ENCODE measurements at regions of chrX and their contacts with region 1.

Region 1: DNA sequence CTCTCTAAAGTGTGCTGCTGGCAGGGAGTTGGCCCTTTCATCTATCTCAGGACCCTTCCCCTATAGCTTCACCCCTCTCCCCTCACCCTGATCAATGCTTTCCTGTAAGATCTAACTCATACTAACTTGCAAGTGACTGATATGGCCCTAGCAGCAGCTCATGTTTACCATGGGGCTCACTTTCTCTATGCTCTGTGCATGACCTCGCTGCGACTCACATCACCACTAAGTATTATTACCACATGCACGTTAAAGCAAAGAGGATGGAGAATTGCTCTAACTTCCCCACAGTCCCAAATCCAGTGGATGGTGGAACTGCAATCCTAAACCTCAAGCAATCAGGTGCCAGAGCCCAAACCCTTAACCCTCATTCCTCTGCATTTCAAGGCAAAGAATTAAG is 626.6 kb downstream of the MID1IP1 start:
- DNase-seq: no peak
- H3K4me3 Mint-ChIP-seq: no peak overlapping the region
- H3K27ac Mint-ChIP-seq: peak overlapping the region; percentile 98
- H3K4me1 Mint-ChIP-seq: peaks cover 58% of the 10 kb centered on the region
- H3K27me3 Mint-ChIP-seq: no peaks in the 10 kb centered on the region

Region 2: GRCh38 chrX:39162322-39162735 is 265.6 kb before region 1 on chrX:
- intact Hi-C with region 1: loop called (anchors 10 kb)
- DNase-seq: no peak
- H3K4me3 Mint-ChIP-seq: peak overlapping the region; percentile 22
- H3K27ac Mint-ChIP-seq: peak overlapping the region; percentile 71
- H3K4me1 Mint-ChIP-seq: peaks cover 45% of the 10 kb centered on the region
- H3K27me3 Mint-ChIP-seq: peaks cover 2% of the 10 kb centered on the region

Region 3: DNA sequence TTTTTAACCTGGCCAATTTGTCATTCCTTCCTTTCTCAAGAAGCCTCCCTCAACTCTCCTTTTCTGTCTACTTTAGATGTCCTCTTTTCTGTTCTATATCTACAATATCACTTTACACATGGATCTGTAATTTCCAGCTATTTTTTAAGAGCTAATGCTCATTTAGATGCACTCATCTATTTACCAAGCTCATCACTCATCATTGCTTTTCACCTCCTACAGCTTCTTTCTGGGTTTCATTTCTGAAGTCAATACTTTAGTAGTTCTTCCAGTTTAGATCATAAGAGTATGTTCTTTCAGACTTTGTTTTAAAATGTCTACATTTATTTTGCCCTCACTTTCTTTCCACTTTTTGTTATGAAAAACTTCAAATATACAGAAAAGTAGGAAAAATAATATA is 159.7 kb before region 1 on chrX:
- intact Hi-C with region 1: loop called (anchors 2 kb)
- DNase-seq: no peak
- H3K4me3 Mint-ChIP-seq: peak overlapping the region; percentile 24
- H3K27ac Mint-ChIP-seq: peak overlapping the region; percentile 84
- H3K4me1 Mint-ChIP-seq: peaks cover 39% of the 10 kb centered on the region
- H3K27me3 Mint-ChIP-seq: no peaks in the 10 kb centered on the region

Region 4: DNA sequence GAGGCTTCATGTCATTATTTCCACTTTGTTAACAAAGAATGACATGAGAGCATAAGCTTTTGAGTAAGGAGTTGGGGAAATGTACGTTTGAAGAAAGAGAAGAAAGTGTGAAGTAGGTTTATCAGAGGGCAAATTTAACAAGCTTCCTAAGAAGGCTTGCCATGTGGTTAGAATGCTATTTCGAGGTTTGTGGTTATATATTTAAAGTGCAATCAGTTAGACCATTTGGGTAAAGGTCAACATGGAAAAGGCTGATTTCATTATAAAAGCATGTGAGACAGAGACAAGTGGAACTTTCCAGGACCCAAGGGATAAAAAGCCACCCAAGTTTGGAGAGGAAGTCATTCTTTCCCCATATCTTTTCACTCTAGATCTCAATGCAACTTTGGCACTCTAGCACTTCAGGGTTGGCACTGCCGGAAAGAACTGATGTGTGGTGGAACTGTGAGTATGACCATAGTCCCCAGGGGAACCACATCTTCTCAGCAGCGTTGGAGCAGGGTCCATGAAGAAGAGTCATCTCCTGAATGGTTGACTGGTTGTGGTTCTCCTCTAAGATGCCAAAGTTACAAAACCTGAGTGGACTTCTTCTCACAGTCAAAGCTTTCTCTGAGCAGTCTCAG is 96.7 kb before region 1 on chrX:
- intact Hi-C with region 1: loop called (anchors 1 kb)
- DNase-seq: peak; percentile 3
- H3K4me3 Mint-ChIP-seq: peak overlapping the region; percentile 42
- H3K27ac Mint-ChIP-seq: peak overlapping the region; percentile 76
- H3K4me1 Mint-ChIP-seq: peaks cover 73% of the 10 kb centered on the region
- H3K27me3 Mint-ChIP-seq: peaks cover 2% of the 10 kb centered on the region

Region 5: GRCh38 chrX:39504850-39505259 is 76.9 kb after region 1 on chrX:
- intact Hi-C with region 1: loop called (anchors 1 kb)
- DNase-seq: no peak
- H3K4me3 Mint-ChIP-seq: no peak overlapping the region
- H3K27ac Mint-ChIP-seq: no peak overlapping the region
- H3K4me1 Mint-ChIP-seq: peaks cover 26% of the 10 kb centered on the region
- H3K27me3 Mint-ChIP-seq: peaks cover 6% of the 10 kb centered on the region

Region 6: GRCh38 chrX:39883666-39884065 is 455.8 kb after region 1 on chrX:
- intact Hi-C with region 1: loop called (anchors 5 kb)
- DNase-seq: peak; percentile 12
- H3K4me3 Mint-ChIP-seq: peak overlapping the region; percentile 58
- H3K27ac Mint-ChIP-seq: peak overlapping the region; percentile 88
- H3K4me1 Mint-ChIP-seq: peaks cover 28% of the 10 kb centered on the region
- H3K27me3 Mint-ChIP-seq: peaks cover 9% of the 10 kb centered on the region